ENCODE measurements at regions of chr7 and their contacts with region 1.

Region 1: DNA sequence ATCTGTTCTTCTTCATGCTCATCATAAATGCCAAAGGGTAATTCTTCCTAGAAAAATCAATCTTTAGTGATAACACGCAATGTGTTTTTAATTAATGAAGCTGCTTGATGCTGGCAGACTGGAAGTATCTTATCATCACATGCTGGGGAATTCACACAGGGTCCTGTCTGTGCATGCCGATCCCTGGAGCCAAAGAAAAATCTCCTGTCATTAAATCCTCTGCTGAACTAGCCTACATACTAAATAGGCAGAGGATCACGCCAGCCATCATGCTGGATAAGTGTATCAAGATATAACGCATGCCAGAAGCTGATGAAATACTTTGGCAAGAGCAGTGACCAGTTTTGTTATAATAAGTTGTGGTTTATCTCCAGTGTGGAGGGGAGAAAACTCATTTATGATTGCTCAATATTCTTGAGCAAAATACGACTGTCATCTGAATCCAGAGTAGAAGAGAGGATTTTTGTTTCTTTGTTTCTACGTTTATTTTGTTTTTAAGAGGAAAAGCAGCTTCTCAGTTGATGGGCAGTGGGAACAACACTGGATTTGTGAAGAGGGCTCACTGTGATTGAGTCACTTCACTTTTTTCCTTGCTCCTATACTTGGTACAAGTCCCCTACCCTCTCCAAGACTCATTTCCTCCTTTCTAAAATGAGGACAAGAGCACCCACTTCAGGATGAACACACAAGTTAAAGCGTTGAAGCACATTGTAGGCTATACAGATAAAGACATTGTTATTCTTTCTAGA is 649.1 kb downstream of the TNS3 start:
- DNase-seq: peak in 1 of 2 donors; percentile 24
- ATAC-seq: peak; percentile 51 to 90 (median 74)
- H3K4me3 ChIP-seq: no peak overlapping the region
- H3K27ac ChIP-seq: peak overlapping the region in 8 of 10 donors; percentile 5 to 70 (median 58)
- H3K4me1 ChIP-seq: peaks cover 0 to 48% (median 23%) of the 10 kb centered on the region in 9 donors
- H3K27me3 ChIP-seq: no peaks in the 10 kb centered on the region
- CTCF ChIP-seq: peak in 6 of 9 donors; percentile 12 to 51 (median 34)

Region 2: DNA sequence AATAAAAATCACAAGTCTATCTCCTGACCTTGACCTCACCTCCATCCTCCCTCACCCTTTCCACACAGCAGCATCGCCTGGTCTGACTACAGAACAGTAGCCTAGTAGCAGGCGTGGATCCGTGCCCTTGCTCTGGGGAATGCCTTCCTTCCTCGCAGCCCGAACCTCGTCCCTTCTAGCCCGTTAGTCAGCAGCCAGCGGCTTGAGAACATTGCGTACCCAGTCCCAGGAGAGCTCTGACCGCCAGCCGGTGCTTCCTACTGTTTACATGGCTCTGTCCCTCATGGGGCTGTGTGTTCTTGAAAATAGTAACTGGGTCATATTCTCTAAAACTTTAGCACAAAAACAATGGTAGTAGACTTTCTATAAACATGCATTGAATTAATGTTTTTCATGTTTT is 329.1 kb before region 1 on chr7:
- intact Hi-C with region 1: loop called in 1 of 10 experiments (anchors 10 kb)
- DNase-seq: peak; percentile 87
- ATAC-seq: peak; percentile 81 to 98 (median 95)
- H3K4me3 ChIP-seq: no peak overlapping the region
- H3K27ac ChIP-seq: peak overlapping the region; percentile 38 to 89 (median 76)
- H3K4me1 ChIP-seq: peaks cover 15 to 43% (median 23%) of the 10 kb centered on the region in 9 donors
- H3K27me3 ChIP-seq: no peaks in the 10 kb centered on the region
- CTCF ChIP-seq: no peak

Region 3: DNA sequence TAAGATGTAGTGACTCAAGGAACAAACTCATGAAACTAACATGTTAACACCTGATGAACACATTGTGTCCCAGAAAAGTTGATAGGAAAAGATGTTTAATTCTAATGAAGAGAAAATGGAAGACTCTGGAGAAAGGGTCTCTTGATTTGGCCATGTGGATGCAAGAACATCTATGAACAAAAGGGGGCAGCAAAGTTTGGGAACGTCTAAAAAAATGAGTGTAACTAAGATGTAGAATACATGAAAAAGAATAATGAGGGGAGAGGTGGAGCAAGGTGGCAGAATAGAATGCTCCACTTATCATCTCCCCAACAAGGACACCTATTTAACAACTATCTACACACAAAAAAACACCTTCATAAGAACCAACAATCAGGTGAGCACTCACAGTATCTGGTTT is 156.1 kb before region 1 on chr7:
- intact Hi-C with region 1: loop called in 1 of 10 experiments (anchors 10 kb)
- DNase-seq: no peak
- ATAC-seq: no peak
- H3K4me3 ChIP-seq: no peak overlapping the region
- H3K27ac ChIP-seq: no peak overlapping the region
- H3K4me1 ChIP-seq: peaks cover 0 to 35% (median 18%) of the 10 kb centered on the region in 9 donors
- H3K27me3 ChIP-seq: no peaks in the 10 kb centered on the region
- CTCF ChIP-seq: peak; percentile 8 to 68 (median 47)

Region 4: GRCh38 chr7:46811529-46811928 is 121.3 kb before region 1 on chr7:
- intact Hi-C with region 1: loop called in 1 of 10 experiments (anchors 10 kb)
- DNase-seq: peak; percentile 19 to 72
- ATAC-seq: peak; percentile 89 to 97 (median 94)
- H3K4me3 ChIP-seq: no peak overlapping the region
- H3K27ac ChIP-seq: peak overlapping the region in 6 of 10 donors; percentile 32 to 67 (median 52)
- H3K4me1 ChIP-seq: peaks cover 0 to 37% (median 13%) of the 10 kb centered on the region in 9 donors
- H3K27me3 ChIP-seq: no peaks in the 10 kb centered on the region
- CTCF ChIP-seq: no peak

Region 5: GRCh38 chr7:46859963-46860475 is 72.8 kb before region 1 on chr7:
- intact Hi-C with region 1: loop called in 1 of 10 experiments (anchors 10 kb)
- DNase-seq: peak in 1 of 2 donors; percentile 32
- ATAC-seq: peak; percentile 23 to 83 (median 62)
- H3K4me3 ChIP-seq: no peak overlapping the region
- H3K27ac ChIP-seq: peak overlapping the region in 1 of 10 donors; percentile 31
- H3K4me1 ChIP-seq: peaks cover 0 to 6% (median 0%) of the 10 kb centered on the region in 9 donors
- H3K27me3 ChIP-seq: no peaks in the 10 kb centered on the region
- CTCF ChIP-seq: no peak

Region 6: GRCh38 chr7:47045207-47046051 is 112.6 kb after region 1 on chr7:
- intact Hi-C with region 1: loop called in 1 of 10 experiments (anchors 10 kb)
- DNase-seq: peak; percentile 60 to 63
- ATAC-seq: peak; percentile 52 to 87 (median 85)
- H3K4me3 ChIP-seq: no peak overlapping the region
- H3K27ac ChIP-seq: peak overlapping the region; percentile 25 to 80 (median 50)
- H3K4me1 ChIP-seq: peaks cover 5 to 67% (median 44%) of the 10 kb centered on the region in 9 donors
- H3K27me3 ChIP-seq: no peaks in the 10 kb centered on the region
- CTCF ChIP-seq: no peak